ENCODE measurements at regions of chr20 and their contacts with region 1.

Region 1: GRCh38 chr20:31698803-31699718 is 23.6 kb downstream of the BCL2L1 start:
- DNase-seq: peak; percentile 76
- H3K4me3 Mint-ChIP-seq: peak overlapping the region; percentile 52
- H3K27ac Mint-ChIP-seq: peak overlapping the region; percentile 97
- H3K4me1 Mint-ChIP-seq: peaks cover 55% of the 10 kb centered on the region
- H3K27me3 Mint-ChIP-seq: no peaks in the 10 kb centered on the region
- CTCF ChIP-seq: no peak

Region 2: GRCh38 chr20:31684153-31685015 is 14.7 kb before region 1 on chr20:
- CTCF ChIA-PET with region 1: interaction called, 11 read pairs
- POLR2A ChIA-PET with region 1: interaction called, 13 read pairs
- intact Hi-C with region 1: no loop called
- DNase-seq: no peak
- H3K4me3 Mint-ChIP-seq: no peak overlapping the region
- H3K27ac Mint-ChIP-seq: peak overlapping the region; percentile 66
- H3K4me1 Mint-ChIP-seq: peaks cover 30% of the 10 kb centered on the region
- H3K27me3 Mint-ChIP-seq: no peaks in the 10 kb centered on the region
- CTCF ChIP-seq: no peak

Region 3: GRCh38 chr20:31712564-31713311 is 13.7 kb after region 1 on chr20:
- CTCF ChIA-PET with region 1: interaction called, 429 read pairs
- POLR2A ChIA-PET with region 1: interaction called, 491 read pairs
- intact Hi-C with region 1: no loop called
- DNase-seq: peak; percentile 92
- H3K4me3 Mint-ChIP-seq: peak overlapping the region; percentile 70
- H3K27ac Mint-ChIP-seq: peak overlapping the region; percentile 96
- H3K4me1 Mint-ChIP-seq: peaks cover 78% of the 10 kb centered on the region
- H3K27me3 Mint-ChIP-seq: no peaks in the 10 kb centered on the region
- CTCF ChIP-seq: no peak